Calu3 (cell line): ENCODE measurements at regions of chr21 and their contacts with region 1.

Region 1: GRCh38 chr21:45554477-45555175 is 12.4 kb upstream of the SLC19A1 start:
- DNase-seq: peak; percentile 84
- H3K4me3 Mint-ChIP-seq: peak overlapping the region; percentile 76
- H3K27ac Mint-ChIP-seq: no peak overlapping the region
- H3K4me1 Mint-ChIP-seq: peaks cover 10% of the 10 kb centered on the region
- H3K27me3 Mint-ChIP-seq: peaks cover 25% of the 10 kb centered on the region
- CTCF ChIP-seq: peak; percentile 40

Region 2: DNA sequence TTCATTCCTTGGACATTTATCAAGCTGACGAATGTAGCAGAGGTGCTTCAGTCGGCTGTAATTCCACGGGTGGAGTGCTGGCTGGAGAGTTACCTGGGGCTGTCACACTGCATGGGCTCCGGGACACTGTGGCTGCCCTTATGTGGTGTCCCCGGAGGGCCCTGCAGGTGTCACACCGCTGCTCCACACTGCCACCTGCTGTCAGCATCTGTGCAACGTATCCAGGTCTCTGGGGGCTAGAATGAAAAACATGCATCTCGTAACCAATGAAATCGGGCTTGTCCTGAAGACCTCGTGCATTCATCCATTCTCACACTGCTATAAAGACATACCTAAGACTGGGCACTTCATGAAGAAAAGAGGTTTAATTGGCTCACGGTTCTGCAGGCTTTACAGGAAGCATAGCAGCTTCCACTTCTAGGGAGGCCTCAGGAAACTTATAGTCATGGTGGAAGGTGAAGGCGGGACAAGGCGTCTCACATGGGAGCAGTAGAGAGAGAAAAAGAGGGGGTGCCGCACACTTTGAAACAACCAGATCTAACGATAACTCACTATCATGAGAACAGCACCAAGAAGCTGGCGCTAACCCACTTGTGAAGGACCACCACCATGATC is 42.2 kb after region 1 on chr21:
- CTCF ChIA-PET with region 1: no interaction called
- intact Hi-C with region 1: loop called (anchors 2 kb)
- DNase-seq: peak; percentile 74
- H3K4me3 Mint-ChIP-seq: no peak overlapping the region
- H3K27ac Mint-ChIP-seq: no peak overlapping the region
- H3K4me1 Mint-ChIP-seq: no peaks in the 10 kb centered on the region
- H3K27me3 Mint-ChIP-seq: peaks cover 47% of the 10 kb centered on the region
- CTCF ChIP-seq: peak; percentile 69

Region 3: GRCh38 chr21:45820171-45821091 is 265.8 kb after region 1 on chr21:
- CTCF ChIA-PET with region 1: no interaction called
- intact Hi-C with region 1: loop called (anchors 5 kb)
- DNase-seq: peak; percentile 76
- H3K4me3 Mint-ChIP-seq: no peak overlapping the region
- H3K27ac Mint-ChIP-seq: no peak overlapping the region
- H3K4me1 Mint-ChIP-seq: peaks cover 12% of the 10 kb centered on the region
- H3K27me3 Mint-ChIP-seq: peaks cover 45% of the 10 kb centered on the region
- CTCF ChIP-seq: peak; percentile 67